Psoas muscle (tissue), 8 donors: ENCODE measurements at regions of chr14 and their contacts with region 1.

Region 1: GRCh38 chr14:24114536-24115450 is at the starts of genes DCAF11 and NRL:
- DNase-seq: peak; percentile 98 to 99
- ATAC-seq: peak; percentile 91 to 93 (median 92)
- H3K4me3 ChIP-seq: peak within 1 kb of the TSS; percentile 80
- H3K27ac ChIP-seq: peak within 1 kb of the TSS; percentile 100
- H3K4me1 ChIP-seq: peaks cover 15% of the 10 kb centered on the region
- H3K27me3 ChIP-seq: no peaks in the 10 kb centered on the region
- CTCF ChIP-seq: no peak
- total RNA-seq, gene DCAF11: 48.8 to 73.5 (median 68.6) TPM
- total RNA-seq, gene NRL: 1.5 to 3.6 (median 2.5) TPM

Region 2: DNA sequence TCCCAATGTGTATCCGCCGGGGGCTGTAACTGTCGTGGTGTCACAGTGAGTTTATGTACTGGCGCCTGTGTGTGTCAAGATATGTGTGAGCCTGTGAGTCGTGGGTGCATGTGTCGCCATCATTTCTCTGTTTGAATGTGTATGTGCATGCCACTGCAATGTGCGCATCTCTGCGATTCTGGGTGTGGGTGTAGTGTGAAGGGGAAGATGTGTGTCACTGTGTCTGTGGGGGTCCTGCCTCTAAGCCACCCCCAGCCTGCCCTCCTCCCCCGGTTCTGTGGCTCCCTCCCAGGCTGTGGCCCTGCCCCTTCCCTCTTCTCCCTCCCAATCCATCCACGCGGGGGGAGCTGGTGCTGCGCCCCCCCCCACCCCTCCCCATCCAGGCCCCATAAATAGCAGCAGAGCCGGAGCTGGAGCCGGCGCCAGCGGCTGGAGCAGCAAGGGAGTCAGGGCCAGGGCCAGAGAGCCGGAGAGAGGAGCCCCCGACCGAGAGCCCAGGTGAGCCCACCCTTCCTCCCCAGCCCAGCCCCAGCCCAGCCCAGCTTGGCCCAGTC is 43.6 kb before region 1 on chr14 and contains the start of gene CPNE6:
- intact Hi-C with region 1: no loop called
- DNase-seq: no peak
- ATAC-seq: no peak
- H3K4me3 ChIP-seq: no peak within 1 kb of the TSS
- H3K27ac ChIP-seq: no peak within 1 kb of the TSS
- H3K4me1 ChIP-seq: no peaks in the 10 kb centered on the region
- H3K27me3 ChIP-seq: peaks cover 0 to 6% (median 4%) of the 10 kb centered on the region in 3 donors
- CTCF ChIP-seq: no peak
- total RNA-seq, gene CPNE6: not detected

Region 3: DNA sequence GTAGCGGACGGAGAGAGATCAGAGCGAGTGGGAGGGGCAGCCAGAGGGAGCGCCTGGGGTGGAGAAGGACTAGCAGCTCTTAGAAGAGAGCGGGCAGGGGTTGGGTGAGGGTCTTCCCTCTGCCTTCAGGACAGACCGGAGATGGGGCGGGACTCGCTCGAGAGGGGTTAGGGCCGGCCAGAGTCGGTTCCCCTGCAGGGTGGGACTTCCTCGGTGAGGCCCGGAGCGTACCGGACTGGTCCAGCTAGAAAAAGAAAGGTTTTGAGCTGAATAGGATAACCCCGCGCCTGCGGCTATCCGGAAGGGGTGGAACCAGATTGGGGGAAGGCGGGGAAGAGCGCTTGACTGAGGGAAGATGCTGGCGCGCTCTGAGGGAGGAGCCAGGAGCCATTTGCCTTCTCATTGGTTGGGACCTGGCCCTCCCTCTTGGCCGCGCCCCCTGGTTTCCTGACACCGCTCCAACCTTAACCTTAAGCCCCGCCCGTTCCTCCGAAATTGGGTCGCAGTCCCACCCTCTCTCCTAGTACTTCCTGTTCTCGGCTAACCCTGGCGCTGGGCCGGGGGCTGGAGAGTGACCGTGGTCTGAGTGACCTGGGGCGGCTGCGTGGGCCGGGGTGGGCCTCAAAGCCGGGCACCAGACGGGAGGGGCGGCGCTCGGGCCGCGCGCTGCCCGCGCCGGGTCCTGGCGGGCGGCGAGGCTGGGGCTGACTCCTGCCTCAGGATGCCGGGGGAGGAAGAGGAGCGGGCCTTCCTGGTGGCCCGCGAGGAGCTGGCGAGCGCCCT is 32.4 kb after region 1 on chr14 and contains the start of gene RNF31:
- intact Hi-C with region 1: loop called (anchors 5 kb)
- DNase-seq: peak; percentile 98 to 99
- ATAC-seq: peak; percentile 92 to 95 (median 94)
- H3K4me3 ChIP-seq: peak within 1 kb of the TSS; percentile 97
- H3K27ac ChIP-seq: peak within 1 kb of the TSS; percentile 86
- H3K4me1 ChIP-seq: peaks cover 39% of the 10 kb centered on the region
- H3K27me3 ChIP-seq: no peaks in the 10 kb centered on the region
- CTCF ChIP-seq: no peak
- total RNA-seq, gene RNF31: 46.4 to 81.5 (median 64.7) TPM

Region 4: DNA sequence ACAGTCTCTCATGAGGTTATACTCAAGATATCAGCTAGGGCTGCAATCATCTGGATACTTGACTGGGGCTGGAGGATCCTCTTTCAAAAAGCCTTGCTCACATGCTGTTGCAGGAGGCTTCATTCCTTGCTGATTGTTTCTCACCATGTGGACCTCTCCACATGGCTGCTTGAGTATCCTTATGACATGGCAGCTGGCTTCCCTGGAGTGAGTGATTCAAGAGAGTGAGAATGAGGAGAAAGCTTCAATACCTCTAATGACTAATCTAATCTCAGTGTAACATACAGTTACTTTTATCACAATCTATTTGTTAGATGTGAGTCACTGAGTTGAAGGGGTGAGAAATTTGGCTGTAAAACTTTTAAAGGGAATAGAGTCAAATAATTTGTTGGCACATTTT is 342.2 kb after region 1 on chr14:
- intact Hi-C with region 1: no loop called
- DNase-seq: no peak
- ATAC-seq: no peak
- H3K4me3 ChIP-seq: no peak overlapping the region
- H3K27ac ChIP-seq: no peak overlapping the region
- H3K4me1 ChIP-seq: no peaks in the 10 kb centered on the region
- H3K27me3 ChIP-seq: peaks cover 0 to 1% (median 0%) of the 10 kb centered on the region in 3 donors
- CTCF ChIP-seq: no peak